WTC11 (cell line): ENCODE measurements at regions of chr17 and their contacts with region 1.

Region 1: GRCh38 chr17:78583091-78583490 is 5.9 kb upstream of the DNAH17 start:
- DNase-seq: peak; percentile 52
- ATAC-seq: peak; percentile 97
- H3K4me3 Mint-ChIP-seq: no peak overlapping the region
- H3K27ac Mint-ChIP-seq: no peak overlapping the region; the same call in 1 of the 2 replicates
- H3K4me1 Mint-ChIP-seq: peaks cover 22% of the 10 kb centered on the region
- H3K27me3 Mint-ChIP-seq: no peaks in the 10 kb centered on the region
- CTCF ChIP-seq: no peak

Region 2: GRCh38 chr17:78497115-78497540 is 86.0 kb before region 1 on chr17:
- CTCF ChIA-PET with region 1: no interaction called
- POLR2A ChIA-PET with region 1: no interaction called
- DNase-seq: peak; percentile 85
- ATAC-seq: peak; percentile 84
- H3K4me3 Mint-ChIP-seq: no peak overlapping the region
- H3K27ac Mint-ChIP-seq: no peak overlapping the region
- H3K4me1 Mint-ChIP-seq: peaks cover 16% of the 10 kb centered on the region
- H3K27me3 Mint-ChIP-seq: peaks cover 14% of the 10 kb centered on the region
- CTCF ChIP-seq: peak; percentile 61; the same call in 1 of the 2 replicates

Region 3: DNA sequence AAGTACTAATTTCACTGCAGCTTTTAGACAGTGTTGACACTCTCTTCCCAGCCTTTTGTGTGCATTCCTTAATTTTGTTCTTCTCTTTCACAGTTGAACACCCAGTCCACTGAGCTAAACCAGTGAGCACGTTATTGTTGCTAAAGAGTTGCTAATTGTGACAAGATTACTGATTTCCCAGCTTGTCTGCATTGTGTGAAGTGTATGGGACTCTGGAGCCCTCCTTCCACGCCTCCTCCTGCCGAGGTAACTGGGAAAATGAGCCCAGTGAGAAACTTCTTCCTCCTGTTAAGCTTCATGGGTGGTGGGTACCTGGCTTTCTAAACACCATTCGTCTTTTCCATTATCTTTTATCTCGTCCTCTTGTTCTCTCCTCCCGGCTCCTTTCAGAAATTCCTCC is 23.9 kb after region 1 on chr17:
- CTCF ChIA-PET with region 1: no interaction called
- POLR2A ChIA-PET with region 1: no interaction called
- DNase-seq: no peak
- ATAC-seq: no peak
- H3K4me3 Mint-ChIP-seq: no peak overlapping the region
- H3K27ac Mint-ChIP-seq: peak overlapping the region; percentile 23; the same call in 1 of the 2 replicates
- H3K4me1 Mint-ChIP-seq: peaks cover 21% of the 10 kb centered on the region
- H3K27me3 Mint-ChIP-seq: peaks cover 40% of the 10 kb centered on the region
- CTCF ChIP-seq: no peak

Region 4: GRCh38 chr17:78665952-78666920 is 83.1 kb after region 1 on chr17:
- CTCF ChIA-PET with region 1: no interaction called
- POLR2A ChIA-PET with region 1: no interaction called
- DNase-seq: no peak
- ATAC-seq: no peak
- H3K4me3 Mint-ChIP-seq: no peak overlapping the region
- H3K27ac Mint-ChIP-seq: no peak overlapping the region; the same call in 1 of the 2 replicates
- H3K4me1 Mint-ChIP-seq: peaks cover 12% of the 10 kb centered on the region
- H3K27me3 Mint-ChIP-seq: no peaks in the 10 kb centered on the region; the same call in 1 of the 2 replicates
- CTCF ChIP-seq: no peak

Region 5: DNA sequence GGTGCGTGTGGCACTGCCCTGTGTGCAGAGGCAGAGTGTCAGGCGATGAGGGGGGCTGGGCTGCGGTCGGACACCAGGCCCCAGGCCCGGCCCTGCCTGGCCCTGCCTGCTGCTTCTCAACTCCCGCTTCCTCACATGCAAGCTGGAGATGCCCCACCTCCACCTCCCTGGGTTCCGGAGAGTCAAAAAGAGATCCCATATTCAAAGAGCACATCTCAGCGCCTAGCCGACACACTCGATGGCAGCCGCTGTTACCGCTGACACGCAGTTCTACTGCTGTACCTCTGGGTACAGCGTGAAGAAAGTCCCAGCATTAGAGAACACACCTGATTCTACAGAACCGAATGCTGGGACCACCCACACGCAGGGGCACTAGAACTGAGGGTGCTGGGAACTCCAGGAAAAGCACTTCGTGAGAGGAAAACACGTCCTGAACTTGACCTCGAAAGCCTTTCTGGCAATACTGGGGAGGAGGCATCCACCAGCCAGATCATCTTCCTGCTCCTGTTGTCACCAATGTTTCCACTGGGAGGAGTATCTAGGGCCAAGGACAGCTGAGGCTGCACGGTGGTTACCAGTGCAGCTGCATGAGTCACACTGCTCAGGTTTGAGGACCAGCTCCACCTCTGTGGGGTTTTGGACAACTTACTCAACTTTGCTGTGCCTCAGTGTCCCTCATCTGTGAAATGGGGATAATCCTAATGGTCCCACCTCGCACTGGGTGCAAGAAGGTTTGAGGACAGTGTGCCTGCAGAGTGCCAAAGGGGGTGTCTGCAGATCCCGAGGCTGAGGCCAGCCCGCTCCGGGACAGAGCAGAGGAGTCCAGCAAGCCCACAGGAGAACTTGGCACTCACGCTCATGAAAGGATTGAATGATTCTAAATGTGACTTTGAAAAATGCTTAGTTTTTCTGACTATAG is 94.5 kb after region 1 on chr17:
- CTCF ChIA-PET with region 1: no interaction called
- POLR2A ChIA-PET with region 1: no interaction called
- DNase-seq: no peak
- ATAC-seq: no peak
- H3K4me3 Mint-ChIP-seq: no peak overlapping the region
- H3K27ac Mint-ChIP-seq: no peak overlapping the region
- H3K4me1 Mint-ChIP-seq: no peaks in the 10 kb centered on the region
- H3K27me3 Mint-ChIP-seq: no peaks in the 10 kb centered on the region
- CTCF ChIP-seq: no peak

Region 6: DNA sequence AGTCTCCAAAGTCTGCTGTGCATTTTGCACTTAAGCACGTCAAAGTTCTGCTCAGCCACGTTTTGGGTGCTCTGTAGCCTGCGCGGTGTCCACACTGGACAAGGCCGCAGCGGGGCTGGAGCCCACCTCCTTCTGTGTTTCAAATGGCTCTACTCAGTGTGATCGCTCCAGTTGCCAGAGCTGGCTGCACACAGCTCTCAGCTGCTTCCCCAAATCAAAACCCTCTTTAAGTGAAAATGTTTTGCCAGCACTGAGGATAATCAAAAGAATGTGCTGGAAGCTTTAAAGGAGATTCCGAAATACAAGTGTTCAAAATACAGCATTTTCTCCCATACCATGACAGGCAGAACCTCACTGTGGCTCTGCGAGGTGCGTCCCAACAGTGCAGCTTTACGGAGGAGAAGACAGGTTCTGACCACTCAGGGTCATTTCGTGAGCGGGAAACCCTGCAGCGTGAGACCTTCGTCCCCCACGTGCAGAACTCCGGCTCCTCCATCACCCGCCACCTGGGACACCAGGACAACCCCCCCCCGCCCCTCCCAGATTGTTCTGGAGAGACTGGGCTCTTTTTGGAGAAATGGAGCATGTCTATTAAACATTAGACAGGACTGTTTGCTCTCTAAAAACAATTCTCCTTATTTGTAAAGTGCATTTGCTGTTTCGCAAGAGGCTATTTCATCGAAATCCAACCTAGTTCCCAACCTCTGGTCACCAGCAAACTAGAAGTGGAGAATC is 1436.0 kb after region 1 on chr17:
- CTCF ChIA-PET with region 1: no interaction called
- POLR2A ChIA-PET with region 1: interaction called, 10 read pairs
- DNase-seq: no peak
- ATAC-seq: no peak
- H3K4me3 Mint-ChIP-seq: no peak overlapping the region
- H3K27ac Mint-ChIP-seq: 0 out of 2 replicates have a peak overlapping the region, but pooled peaks have one; percentile 36
- H3K4me1 Mint-ChIP-seq: peaks cover 12% of the 10 kb centered on the region
- H3K27me3 Mint-ChIP-seq: no peaks in the 10 kb centered on the region
- CTCF ChIP-seq: no peak